ENCODE measurements at regions of chr1 and their contacts with region 1.

Region 1: GRCh38 chr1:160098852-160099561 is 588 bp upstream of the IGSF8 start:
- DNase-seq: peak; percentile 96 to 98
- H3K4me3 ChIP-seq: peak overlapping the region; percentile 38
- H3K4me3 Mint-ChIP-seq: peak overlapping the region; percentile 86
- H3K27ac Mint-ChIP-seq: peak overlapping the region; percentile 11
- H3K4me1 ChIP-seq: peaks cover 30% of the 10 kb centered on the region
- H3K4me1 Mint-ChIP-seq: peaks cover 26% of the 10 kb centered on the region
- H3K27me3 ChIP-seq: no peaks in the 10 kb centered on the region
- H3K27me3 Mint-ChIP-seq: no peaks in the 10 kb centered on the region
- CTCF ChIP-seq: no peak

Region 2: DNA sequence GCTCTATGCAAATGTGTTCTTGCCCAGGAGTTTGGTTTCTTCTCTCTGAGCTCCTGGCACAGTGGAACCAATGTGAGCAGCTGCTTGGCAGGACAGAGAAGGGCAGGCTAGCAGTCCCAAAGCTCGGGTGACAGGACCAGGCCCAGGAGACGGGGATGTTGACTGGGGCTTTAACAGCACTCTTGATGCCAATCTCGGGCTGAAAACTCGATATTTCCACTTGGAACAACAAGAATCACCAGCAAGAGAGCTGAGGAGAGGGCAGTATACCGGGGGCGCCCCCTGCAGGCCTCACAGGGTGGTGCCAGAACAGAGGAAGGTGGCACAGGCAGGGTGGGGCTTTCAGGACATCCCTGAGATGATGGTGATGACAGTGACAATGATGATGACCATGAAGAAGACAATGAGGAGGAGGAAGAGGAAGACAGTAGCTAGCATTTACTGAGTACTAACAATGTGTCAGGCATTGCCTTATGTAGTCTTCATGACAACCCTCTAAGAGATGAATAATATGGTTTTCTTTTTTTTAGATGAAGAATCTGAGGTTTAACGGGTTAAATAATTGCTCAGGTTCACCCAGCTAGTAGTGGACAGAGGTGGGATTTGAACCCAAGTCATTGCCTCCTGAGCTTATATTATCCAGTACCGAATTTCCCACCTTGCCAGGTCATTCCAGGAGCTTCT is 20.4 kb before region 1 on chr1:
- CTCF ChIA-PET with region 1: interaction called, 10 read pairs
- POLR2A ChIA-PET with region 1: no interaction called
- intact Hi-C with region 1: no loop called
- DNase-seq: peak; percentile 64 to 74
- H3K4me3 ChIP-seq: no peak overlapping the region
- H3K4me3 Mint-ChIP-seq: no peak overlapping the region
- H3K27ac Mint-ChIP-seq: no peak overlapping the region
- H3K4me1 ChIP-seq: no peaks in the 10 kb centered on the region
- H3K4me1 Mint-ChIP-seq: no peaks in the 10 kb centered on the region
- H3K27me3 ChIP-seq: no peaks in the 10 kb centered on the region
- H3K27me3 Mint-ChIP-seq: peaks cover 14% of the 10 kb centered on the region
- CTCF ChIP-seq: peak; percentile 74 to 87

Region 3: DNA sequence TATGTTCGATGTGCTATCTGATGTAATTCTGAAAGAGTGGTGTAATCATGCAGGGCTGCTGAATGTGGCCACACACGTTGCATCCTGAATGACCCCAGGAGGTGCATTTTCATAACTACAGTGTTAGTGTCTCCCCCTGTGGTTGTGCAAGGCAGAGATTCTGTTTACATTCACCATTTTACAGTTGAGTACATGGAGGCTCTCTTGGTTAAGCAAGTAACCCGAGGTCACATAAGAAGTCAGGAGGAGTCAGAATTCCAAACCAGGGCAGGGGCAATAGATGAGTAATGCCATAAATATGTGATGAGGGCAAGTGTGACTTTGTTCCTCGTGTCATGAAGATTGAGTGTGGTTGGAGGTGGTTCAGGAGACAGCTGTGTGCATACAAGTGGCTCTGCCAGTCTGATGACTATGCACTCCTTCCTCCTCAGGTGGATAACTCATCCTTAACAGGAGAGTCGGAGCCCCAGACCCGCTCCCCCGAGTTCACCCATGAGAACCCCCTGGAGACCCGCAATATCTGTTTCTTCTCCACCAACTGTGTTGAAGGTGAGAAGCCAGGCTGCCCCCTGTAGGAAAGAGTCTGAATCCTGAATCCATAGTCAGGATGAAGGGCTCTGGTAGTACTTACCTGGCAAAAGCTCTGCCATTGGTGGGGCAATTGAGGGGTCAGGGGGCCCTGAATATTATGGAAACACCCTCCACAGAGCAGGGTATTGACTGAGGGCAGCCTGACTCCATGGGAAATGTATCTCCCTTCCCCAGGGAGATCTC is 25.9 kb after region 1 on chr1:
- CTCF ChIA-PET with region 1: interaction called, 3 read pairs
- POLR2A ChIA-PET with region 1: interaction called, 5 read pairs
- intact Hi-C with region 1: loop called (anchors 2 kb)
- DNase-seq: peak; percentile 75 to 82
- H3K4me3 ChIP-seq: no peak overlapping the region
- H3K4me3 Mint-ChIP-seq: no peak overlapping the region
- H3K27ac Mint-ChIP-seq: peak overlapping the region; percentile 89
- H3K4me1 ChIP-seq: peaks cover 26% of the 10 kb centered on the region
- H3K4me1 Mint-ChIP-seq: peaks cover 18% of the 10 kb centered on the region
- H3K27me3 ChIP-seq: no peaks in the 10 kb centered on the region
- H3K27me3 Mint-ChIP-seq: no peaks in the 10 kb centered on the region
- CTCF ChIP-seq: peak in 1 of 2 experiments; percentile 40

Region 4: GRCh38 chr1:160193091-160193819 is 94.2 kb after region 1 on chr1:
- CTCF ChIA-PET with region 1: interaction called, 17 read pairs
- POLR2A ChIA-PET with region 1: no interaction called
- intact Hi-C with region 1: loop called (anchors 1 kb)
- DNase-seq: peak; percentile 83 to 90
- H3K4me3 ChIP-seq: no peak overlapping the region
- H3K4me3 Mint-ChIP-seq: no peak overlapping the region
- H3K27ac Mint-ChIP-seq: no peak overlapping the region
- H3K4me1 ChIP-seq: peaks cover 17% of the 10 kb centered on the region
- H3K4me1 Mint-ChIP-seq: no peaks in the 10 kb centered on the region
- H3K27me3 ChIP-seq: no peaks in the 10 kb centered on the region
- H3K27me3 Mint-ChIP-seq: no peaks in the 10 kb centered on the region
- CTCF ChIP-seq: peak; percentile 86 to 91

Region 5: GRCh38 chr1:160251687-160252526 is 152.9 kb after region 1 on chr1:
- CTCF ChIA-PET with region 1: interaction called, 33 read pairs
- POLR2A ChIA-PET with region 1: no interaction called
- intact Hi-C with region 1: loop called (anchors 1 kb)
- DNase-seq: peak; percentile 68 to 69
- H3K4me3 ChIP-seq: no peak overlapping the region
- H3K4me3 Mint-ChIP-seq: no peak overlapping the region
- H3K27ac Mint-ChIP-seq: peak overlapping the region; percentile 34
- H3K4me1 ChIP-seq: no peaks in the 10 kb centered on the region
- H3K4me1 Mint-ChIP-seq: peaks cover 12% of the 10 kb centered on the region
- H3K27me3 ChIP-seq: no peaks in the 10 kb centered on the region
- H3K27me3 Mint-ChIP-seq: no peaks in the 10 kb centered on the region
- CTCF ChIP-seq: peak; percentile 67 to 77

Region 6: DNA sequence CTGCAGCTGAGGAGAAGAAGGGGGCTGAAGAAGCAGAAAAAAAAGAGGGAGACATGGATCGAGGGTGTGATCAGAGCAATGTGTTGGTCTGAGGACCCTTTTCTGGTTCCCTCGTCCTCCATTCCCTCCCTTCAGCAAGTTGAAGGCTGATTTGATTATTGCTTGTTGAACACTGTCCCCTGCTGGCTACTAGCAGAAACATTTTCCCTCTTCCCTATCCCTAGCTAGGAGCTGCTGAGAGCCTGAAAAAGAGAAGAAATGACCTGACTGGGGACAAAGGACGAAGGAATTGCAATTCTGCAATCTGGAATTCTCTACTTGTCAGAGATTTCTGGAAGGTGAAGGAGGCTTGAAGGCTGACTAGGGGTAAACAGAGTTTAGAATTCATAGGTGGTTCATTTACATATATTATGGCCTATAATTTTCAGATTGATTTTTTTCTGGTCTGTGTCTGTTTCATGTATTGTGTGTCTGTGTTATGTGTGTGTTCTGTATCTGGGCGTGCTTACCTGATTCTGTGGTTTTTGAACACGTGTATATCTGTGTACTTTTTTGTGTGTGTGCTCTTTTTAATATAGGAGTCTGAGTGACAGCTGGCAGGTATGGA is 277.6 kb after region 1 on chr1:
- CTCF ChIA-PET with region 1: interaction called, 13 read pairs
- POLR2A ChIA-PET with region 1: no interaction called
- intact Hi-C with region 1: loop called (anchors 1 kb)
- DNase-seq: peak; percentile 51 to 62
- H3K4me3 ChIP-seq: no peak overlapping the region
- H3K4me3 Mint-ChIP-seq: no peak overlapping the region
- H3K27ac Mint-ChIP-seq: no peak overlapping the region
- H3K4me1 ChIP-seq: no peaks in the 10 kb centered on the region
- H3K4me1 Mint-ChIP-seq: peaks cover 13% of the 10 kb centered on the region
- H3K27me3 ChIP-seq: no peaks in the 10 kb centered on the region
- H3K27me3 Mint-ChIP-seq: peaks cover 6% of the 10 kb centered on the region
- CTCF ChIP-seq: peak; percentile 67 to 91

Measured in Caco-2 (cell line).